OCI-LY7 (cell line): ENCODE measurements at regions of chr1 and their contacts with region 1.

Region 1: GRCh38 chr1:113881661-113882060 is 5.7 kb downstream of the BCL2L15 start:
- DNase-seq: no peak
- H3K4me3 ChIP-seq: no peak overlapping the region
- H3K27ac ChIP-seq: no peak overlapping the region
- H3K4me1 ChIP-seq: peaks cover 6% of the 10 kb centered on the region
- CTCF ChIP-seq: no peak

Region 2: GRCh38 chr1:113616156-113616555 is 265.5 kb before region 1 on chr1:
- CTCF ChIA-PET with region 1: no interaction called
- POLR2A ChIA-PET with region 1: no interaction called
- intact Hi-C with region 1: no loop called
- DNase-seq: no peak
- H3K4me3 ChIP-seq: no peak overlapping the region
- H3K27ac ChIP-seq: no peak overlapping the region
- H3K4me1 ChIP-seq: no peaks in the 10 kb centered on the region
- CTCF ChIP-seq: no peak

Region 3: GRCh38 chr1:113859478-113860175 is 22.0 kb before region 1 on chr1:
- CTCF ChIA-PET with region 1: no interaction called
- POLR2A ChIA-PET with region 1: interaction called, 16 read pairs
- intact Hi-C with region 1: no loop called
- DNase-seq: peak; percentile 85
- H3K4me3 ChIP-seq: peak overlapping the region; percentile 58
- H3K27ac ChIP-seq: peak overlapping the region; percentile 94
- H3K4me1 ChIP-seq: peaks cover 70% of the 10 kb centered on the region
- CTCF ChIP-seq: no peak